ENCODE measurements at regions of chr12 and their contacts with region 1.

Region 1: DNA sequence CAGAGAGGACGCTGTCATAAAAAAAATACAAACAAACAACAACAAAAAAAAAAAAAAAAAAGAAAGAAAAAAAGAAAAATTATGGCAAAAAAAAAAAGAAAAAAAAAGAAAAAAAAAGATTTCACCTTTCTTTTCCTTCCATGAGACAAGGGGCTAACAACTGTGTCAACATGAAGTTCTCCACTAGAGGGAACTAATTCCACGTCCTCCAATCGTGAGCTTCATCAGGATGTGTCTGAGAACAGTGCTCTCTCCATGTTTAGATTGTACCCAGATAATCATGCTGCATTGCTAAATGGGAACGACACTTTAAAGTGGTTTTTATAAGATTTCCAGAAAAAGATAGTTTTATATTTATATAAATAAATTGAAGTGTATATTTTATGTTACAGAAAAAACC is 96.2 kb upstream of the PTPRB start:
- DNase-seq: no peak
- H3K4me3 ChIP-seq: no peak overlapping the region
- CTCF ChIP-seq: peak; percentile 62

Region 2: DNA sequence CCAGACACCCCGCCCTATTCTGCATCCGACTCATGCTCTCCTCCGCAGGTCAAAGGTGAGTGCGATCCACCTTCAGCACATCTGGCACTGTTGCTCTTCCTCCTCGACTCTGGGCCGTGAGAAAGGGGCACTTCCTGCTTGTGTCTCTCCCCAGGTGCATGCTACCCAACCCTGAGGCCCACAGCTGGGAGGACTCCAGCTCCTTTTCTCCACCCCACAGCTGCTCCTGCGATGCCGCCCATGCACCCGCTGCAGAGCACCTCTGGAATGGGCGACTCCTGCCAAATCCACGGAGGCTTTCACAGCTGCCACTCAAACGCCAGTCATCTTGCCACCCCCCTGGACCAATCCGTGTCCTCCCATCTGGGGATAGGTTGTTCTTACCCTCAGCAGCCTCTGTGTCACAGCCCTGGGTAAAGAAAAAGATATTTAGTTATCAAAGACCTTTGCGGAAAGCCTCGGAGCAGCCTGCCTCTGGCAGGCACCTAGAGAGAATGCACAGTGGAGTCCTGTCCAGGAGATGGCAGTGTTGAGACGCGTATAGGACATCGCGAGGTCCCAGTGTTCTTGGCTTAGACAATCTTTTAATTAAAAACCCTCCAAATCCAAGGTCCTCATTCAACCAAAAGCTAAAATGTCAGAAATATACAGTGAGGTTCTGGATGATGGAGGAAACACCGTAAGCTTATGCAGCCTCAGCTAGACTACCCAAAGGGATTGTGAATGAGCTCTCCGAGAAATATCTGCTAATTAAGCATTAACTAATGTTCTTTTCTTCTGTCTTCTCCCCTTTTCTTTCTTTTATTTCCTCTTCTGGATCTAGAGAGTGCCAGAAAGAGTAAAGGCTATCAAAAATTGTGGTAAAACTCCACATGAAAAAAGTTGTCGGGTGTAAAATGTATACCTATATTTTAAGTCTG is 854.1 kb before region 1 on chr12:
- CTCF ChIA-PET with region 1: interaction called, 54 read pairs
- POLR2A ChIA-PET with region 1: no interaction called
- DNase-seq: no peak
- H3K4me3 ChIP-seq: peak overlapping the region; percentile 42
- CTCF ChIP-seq: peak; percentile 80

Region 3: GRCh38 chr12:70255311-70255710 is 478.1 kb before region 1 on chr12:
- CTCF ChIA-PET with region 1: no interaction called
- POLR2A ChIA-PET with region 1: no interaction called
- DNase-seq: no peak
- H3K4me3 ChIP-seq: no peak overlapping the region
- CTCF ChIP-seq: no peak

Region 4: DNA sequence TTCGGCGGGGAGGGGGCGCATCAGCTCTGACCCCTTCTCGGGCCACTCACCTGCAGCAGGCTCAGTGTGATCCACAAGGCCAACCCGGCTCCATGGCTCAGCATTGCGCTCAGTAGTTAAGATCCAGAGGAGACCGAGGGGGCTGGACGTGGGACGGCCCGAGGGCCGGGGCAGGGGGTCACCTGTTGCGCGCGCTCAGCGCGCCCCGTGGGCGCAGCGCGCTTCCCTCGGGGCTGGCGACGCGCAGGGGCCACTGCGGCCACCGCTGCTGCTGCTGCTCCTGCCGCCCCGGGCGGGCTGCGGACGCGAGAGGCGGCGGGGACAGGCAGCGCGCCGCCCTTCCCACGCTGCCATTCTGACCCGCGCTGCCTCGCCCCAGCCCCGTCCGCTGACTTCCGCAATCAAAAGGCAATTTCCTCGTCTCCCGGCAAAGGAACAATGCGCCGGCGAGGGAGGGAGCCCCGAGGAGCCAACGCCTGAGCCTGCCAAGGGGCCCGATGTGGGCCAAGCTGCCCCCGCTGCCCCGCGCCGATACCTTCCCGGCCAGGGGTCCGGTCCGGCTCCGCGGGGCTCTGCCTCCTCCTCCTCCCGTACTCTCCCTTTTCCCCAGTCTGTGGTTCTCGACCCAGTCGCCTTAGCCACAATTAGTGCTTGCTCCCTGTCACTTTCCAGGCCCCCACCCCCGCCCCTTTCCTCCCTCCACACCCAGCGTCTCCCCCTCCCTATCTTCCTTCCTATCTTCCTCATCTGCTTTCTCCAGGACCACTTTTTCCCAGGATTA is 123.5 kb before region 1 on chr12:
- CTCF ChIA-PET with region 1: no interaction called
- POLR2A ChIA-PET with region 1: no interaction called
- DNase-seq: no peak
- H3K4me3 ChIP-seq: peak overlapping the region; percentile 59
- CTCF ChIP-seq: no peak

Region 5: DNA sequence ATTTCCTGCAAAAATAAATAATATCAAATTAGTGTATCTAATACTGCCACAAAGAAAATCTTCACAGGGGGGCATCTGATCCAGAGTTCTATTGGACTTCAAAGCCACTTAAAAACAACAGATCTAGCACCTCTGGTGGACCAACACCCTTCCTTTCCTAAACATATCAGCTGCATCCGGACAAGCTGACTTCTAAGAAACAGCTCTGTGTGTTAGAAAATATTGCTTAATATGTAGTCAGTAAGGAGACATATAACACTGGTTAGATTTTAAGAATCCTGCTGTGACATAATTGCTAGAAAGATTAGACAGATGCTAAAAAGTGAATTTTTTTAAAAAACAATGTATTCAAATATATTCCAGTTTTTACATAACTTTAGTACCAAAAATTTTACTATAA is 35.0 kb before region 1 on chr12:
- CTCF ChIA-PET with region 1: interaction called, 11 read pairs
- POLR2A ChIA-PET with region 1: no interaction called
- DNase-seq: no peak
- H3K4me3 ChIP-seq: no peak overlapping the region
- CTCF ChIP-seq: no peak

Region 6: DNA sequence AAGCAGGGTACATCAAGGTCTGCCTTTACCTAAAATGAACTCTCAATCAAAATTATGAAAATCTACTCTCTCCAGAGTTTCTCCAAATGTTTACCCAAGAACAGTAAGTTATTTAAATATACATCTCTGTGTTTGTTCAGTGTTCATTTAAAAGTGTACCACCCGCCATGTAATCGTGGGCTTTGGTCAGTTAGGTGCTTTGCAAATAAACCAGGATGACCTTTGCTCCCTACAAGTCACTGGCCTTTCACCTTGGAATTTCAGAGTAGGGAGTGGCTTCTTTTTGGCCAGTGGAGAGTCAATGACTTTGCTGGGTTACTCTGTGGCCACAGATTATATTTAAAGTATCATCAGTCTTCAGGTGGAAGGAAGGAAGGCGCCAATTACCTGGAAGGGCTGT is 21.6 kb before region 1 on chr12:
- CTCF ChIA-PET with region 1: no interaction called
- POLR2A ChIA-PET with region 1: no interaction called
- DNase-seq: no peak
- H3K4me3 ChIP-seq: no peak overlapping the region
- CTCF ChIP-seq: no peak

Region 7: GRCh38 chr12:70744133-70744532 is 10.7 kb after region 1 on chr12:
- CTCF ChIA-PET with region 1: interaction called, 29 read pairs
- POLR2A ChIA-PET with region 1: no interaction called
- DNase-seq: no peak
- H3K4me3 ChIP-seq: no peak overlapping the region
- CTCF ChIP-seq: no peak

Region 8: GRCh38 chr12:70849265-70849960 is 116.0 kb after region 1 on chr12:
- CTCF ChIA-PET with region 1: interaction called, 102 read pairs
- POLR2A ChIA-PET with region 1: no interaction called
- DNase-seq: no peak
- H3K4me3 ChIP-seq: no peak overlapping the region
- CTCF ChIP-seq: peak; percentile 31

Region 9: GRCh38 chr12:71014180-71014785 is 280.9 kb after region 1 on chr12:
- CTCF ChIA-PET with region 1: interaction called, 86 read pairs
- POLR2A ChIA-PET with region 1: no interaction called
- DNase-seq: no peak
- H3K4me3 ChIP-seq: no peak overlapping the region
- CTCF ChIP-seq: peak; percentile 20

Measured in AG04449 (cell line).